Naive thymus-derived CD4-positive, alpha-beta T cell (primary cell): ENCODE measurements at regions of chr21 and their contacts with region 1.

Region 1: DNA sequence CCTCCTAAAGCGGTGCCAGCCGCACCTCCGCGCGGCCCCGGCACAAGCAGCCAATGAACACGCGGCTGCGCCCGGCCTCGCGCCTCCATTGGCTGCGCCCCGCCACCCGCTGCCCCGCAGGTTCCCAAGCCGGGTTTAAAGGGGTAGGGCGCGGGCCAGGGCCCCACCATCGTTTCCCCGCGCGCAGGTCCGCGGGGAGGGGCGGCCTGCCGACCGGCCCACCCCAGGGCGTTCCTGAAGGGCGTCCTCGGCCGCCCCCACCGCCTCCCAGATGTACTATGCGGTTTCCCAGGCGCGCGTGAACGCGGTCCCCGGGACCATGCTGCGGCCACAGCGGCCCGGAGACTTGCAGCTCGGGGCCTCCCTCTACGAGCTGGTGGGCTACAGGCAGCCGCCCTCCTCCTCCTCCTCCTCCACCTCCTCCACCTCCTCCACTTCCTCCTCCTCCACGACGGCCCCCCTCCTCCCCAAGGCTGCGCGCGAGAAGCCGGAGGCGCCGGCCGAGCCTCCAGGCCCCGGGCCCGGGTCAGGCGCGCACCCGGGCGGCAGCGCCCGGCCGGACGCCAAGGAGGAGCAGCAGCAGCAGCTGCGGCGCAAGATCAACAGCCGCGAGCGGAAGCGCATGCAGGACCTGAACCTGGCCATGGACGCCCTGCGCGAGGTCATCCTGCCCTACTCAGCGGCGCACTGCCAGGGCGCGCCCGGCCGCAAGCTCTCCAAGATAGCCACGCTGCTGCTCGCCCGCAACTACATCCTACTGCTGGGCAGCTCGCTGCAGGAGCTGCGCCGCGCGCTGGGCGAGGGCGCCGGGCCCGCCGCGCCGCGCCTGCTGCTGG is at the start of gene OLIG1:
- DNase-seq: peak in 6 of 9 donors; percentile 14 to 43 (median 22)
- ATAC-seq: peak; percentile 83
- H3K4me3 ChIP-seq: peak within 1 kb of the TSS; percentile 13
- H3K4me3 Mint-ChIP-seq: peak within 1 kb of the TSS; percentile 58 to 88 (median 82)
- H3K27ac ChIP-seq: no peak within 1 kb of the TSS
- H3K27ac Mint-ChIP-seq: no peak within 1 kb of the TSS
- H3K4me1 ChIP-seq: no peaks in the 10 kb centered on the region
- H3K4me1 Mint-ChIP-seq: peaks cover 10 to 28% (median 24%) of the 10 kb centered on the region in 7 donors
- H3K27me3 ChIP-seq: peaks cover 8 to 11% of the 10 kb centered on the region in 2 donors
- H3K27me3 Mint-ChIP-seq: peaks cover 54 to 78% (median 70%) of the 10 kb centered on the region in 5 donors
- total RNA-seq, gene OLIG1: 0.34 to 9.3 TPM in 2 of 5 experiments, not detected in the others

Region 2: GRCh38 chr21:33019885-33020557 is 50.2 kb before region 1 on chr21:
- CTCF ChIA-PET with region 1: no interaction called
- POLR2A ChIA-PET with region 1: no interaction called
- intact Hi-C with region 1: loop called (anchors 5 kb)
- DNase-seq: no peak
- ATAC-seq: peak; percentile 43
- H3K4me3 ChIP-seq: peak overlapping the region; percentile 35
- H3K4me3 Mint-ChIP-seq: peak overlapping the region; percentile 45 to 83 (median 77)
- H3K27ac ChIP-seq: no peak overlapping the region
- H3K27ac Mint-ChIP-seq: no peak overlapping the region
- H3K4me1 ChIP-seq: peaks cover 17 to 28% of the 10 kb centered on the region in 2 donors
- H3K4me1 Mint-ChIP-seq: peaks cover 19 to 53% (median 41%) of the 10 kb centered on the region in 7 donors
- H3K27me3 ChIP-seq: peaks cover 13 to 21% of the 10 kb centered on the region in 2 donors
- H3K27me3 Mint-ChIP-seq: peaks cover 79 to 93% (median 88%) of the 10 kb centered on the region in 5 donors

Region 3: DNA sequence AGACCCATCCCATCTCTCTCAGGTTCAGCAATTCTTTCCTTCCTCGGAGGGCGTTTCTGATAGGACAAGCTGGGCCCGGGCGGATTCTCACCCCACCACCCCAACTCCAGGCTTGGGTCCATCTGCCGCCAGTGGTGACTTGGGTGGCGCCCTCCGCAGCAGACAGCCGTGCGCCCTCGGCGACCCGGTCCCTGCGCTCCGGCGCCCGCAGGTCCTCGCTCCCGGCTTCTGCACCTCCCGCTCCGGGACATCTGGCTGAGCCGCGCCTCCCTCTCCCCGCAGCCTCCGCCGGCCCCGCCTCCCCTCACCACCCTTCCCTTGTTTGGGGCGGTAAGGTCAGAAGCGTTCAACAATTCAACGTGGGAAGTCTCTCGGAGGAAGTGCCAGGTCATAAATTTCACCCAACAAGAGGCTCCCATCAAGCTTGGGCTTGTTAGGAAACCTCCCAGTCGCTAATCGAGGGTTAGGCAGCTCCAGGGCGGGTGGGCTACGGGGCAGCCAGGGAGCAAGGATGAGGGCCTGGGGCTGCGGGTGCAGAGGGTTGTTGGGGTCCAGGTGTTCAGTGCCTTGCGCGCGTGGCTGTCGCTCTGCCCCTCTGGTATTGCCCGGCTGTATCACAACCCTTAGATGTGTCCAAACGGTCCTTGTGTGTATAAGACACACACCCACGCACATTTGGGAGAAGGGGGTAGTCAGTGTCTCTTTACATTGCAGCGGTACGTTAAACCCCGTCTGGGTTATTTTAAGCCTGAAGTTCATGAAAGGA is 39.6 kb after region 1 on chr21:
- CTCF ChIA-PET with region 1: no interaction called
- POLR2A ChIA-PET with region 1: no interaction called
- intact Hi-C with region 1: loop called in 1 of 2 experiments (anchors 5 kb)
- DNase-seq: peak in 4 of 9 donors; percentile 14 to 21 (median 17)
- ATAC-seq: peak; percentile 66
- H3K4me3 ChIP-seq: no peak overlapping the region
- H3K4me3 Mint-ChIP-seq: peak overlapping the region in 9 of 10 donors; percentile 42 to 82 (median 74)
- H3K27ac ChIP-seq: no peak overlapping the region
- H3K27ac Mint-ChIP-seq: no peak overlapping the region
- H3K4me1 ChIP-seq: peaks cover 0 to 7% of the 10 kb centered on the region in 2 donors
- H3K4me1 Mint-ChIP-seq: peaks cover 2 to 36% (median 15%) of the 10 kb centered on the region in 7 donors
- H3K27me3 ChIP-seq: peaks cover 3 to 5% of the 10 kb centered on the region in 2 donors
- H3K27me3 Mint-ChIP-seq: peaks cover 28 to 77% (median 38%) of the 10 kb centered on the region in 5 donors